CD4-positive, alpha-beta memory T cell (primary cell): ENCODE measurements at regions of chr20 and their contacts with region 1.

Region 1: GRCh38 chr20:20568604-20569205 is 143.7 kb downstream of the RALGAPA2 start:
- DNase-seq: peak in 4 of 5 donors; percentile 4 to 23 (median 10)
- H3K4me3 ChIP-seq: no peak overlapping the region
- H3K4me3 Mint-ChIP-seq: no peak overlapping the region
- H3K27ac ChIP-seq: no peak overlapping the region
- H3K27ac Mint-ChIP-seq: no peak overlapping the region
- H3K4me1 ChIP-seq: no peaks in the 10 kb centered on the region
- H3K4me1 Mint-ChIP-seq: no peaks in the 10 kb centered on the region
- H3K27me3 ChIP-seq: no peaks in the 10 kb centered on the region
- H3K27me3 Mint-ChIP-seq: no peaks in the 10 kb centered on the region

Region 2: DNA sequence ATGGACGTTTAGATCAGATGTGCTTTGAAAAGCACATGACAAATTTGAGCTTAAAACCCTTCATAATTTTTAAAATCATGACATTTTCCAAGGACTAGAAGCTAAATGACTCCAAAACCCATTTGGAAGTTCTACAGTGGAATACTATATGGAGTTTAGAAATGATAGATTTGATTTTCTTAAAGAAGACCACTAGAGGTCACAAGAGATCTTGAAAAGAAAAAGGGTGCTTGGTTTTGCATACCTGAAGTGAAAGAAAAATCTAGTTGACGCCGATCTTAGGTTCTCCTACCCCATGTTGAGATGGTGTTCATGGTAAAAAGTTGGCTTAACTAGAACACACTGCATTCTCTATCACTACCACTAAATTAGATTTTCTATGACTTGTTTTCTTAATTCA is 484.9 kb before region 1 on chr20:
- CTCF ChIA-PET with region 1: interaction called, 10 read pairs
- POLR2A ChIA-PET with region 1: no interaction called
- intact Hi-C with region 1: no loop called
- DNase-seq: peak in 4 of 5 donors; percentile 22 to 47 (median 44)
- H3K4me3 ChIP-seq: no peak overlapping the region
- H3K4me3 Mint-ChIP-seq: peak overlapping the region in 6 of 8 donors; percentile 75 to 83 (median 78)
- H3K27ac ChIP-seq: no peak overlapping the region
- H3K27ac Mint-ChIP-seq: peak overlapping the region in 2 of 7 donors; percentile 84 to 86
- H3K4me1 ChIP-seq: no peaks in the 10 kb centered on the region
- H3K4me1 Mint-ChIP-seq: peaks cover 0 to 9% (median 7%) of the 10 kb centered on the region in 4 donors
- H3K27me3 ChIP-seq: no peaks in the 10 kb centered on the region
- H3K27me3 Mint-ChIP-seq: peaks cover 6 to 17% of the 10 kb centered on the region in 2 donors

Region 3: GRCh38 chr20:20360464-20360863 is 208.2 kb before region 1 on chr20:
- CTCF ChIA-PET with region 1: no interaction called
- POLR2A ChIA-PET with region 1: no interaction called
- intact Hi-C with region 1: loop called (anchors 1 kb)
- DNase-seq: peak in 2 of 5 donors; percentile 9 to 15
- H3K4me3 ChIP-seq: no peak overlapping the region
- H3K4me3 Mint-ChIP-seq: peak overlapping the region in 6 of 8 donors; percentile 16 to 61 (median 32)
- H3K27ac ChIP-seq: no peak overlapping the region
- H3K27ac Mint-ChIP-seq: no peak overlapping the region
- H3K4me1 ChIP-seq: peaks cover 12% of the 10 kb centered on the region
- H3K4me1 Mint-ChIP-seq: peaks cover 11 to 28% (median 15%) of the 10 kb centered on the region in 4 donors
- H3K27me3 ChIP-seq: peaks cover 5% of the 10 kb centered on the region
- H3K27me3 Mint-ChIP-seq: peaks cover 28 to 29% of the 10 kb centered on the region in 2 donors

Region 4: DNA sequence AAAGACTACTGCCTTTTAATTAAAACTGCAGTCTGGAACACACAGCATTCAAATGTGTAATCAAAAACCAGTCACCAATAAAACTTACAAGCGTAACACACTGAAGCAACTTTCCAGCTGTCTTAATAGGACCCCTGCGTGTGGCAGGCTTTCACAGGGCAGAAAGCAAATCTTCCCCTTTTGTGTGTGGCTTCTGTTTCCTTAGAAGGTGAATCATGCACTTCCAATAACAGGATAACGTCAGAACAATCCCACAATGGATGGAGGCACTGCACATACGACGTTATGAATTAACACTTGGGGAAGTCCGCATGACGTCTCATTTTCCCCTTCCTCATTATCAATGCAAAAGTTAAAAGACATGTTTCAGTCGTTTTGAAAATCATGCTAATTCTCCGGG is 156.0 kb before region 1 on chr20:
- CTCF ChIA-PET with region 1: no interaction called
- POLR2A ChIA-PET with region 1: no interaction called
- intact Hi-C with region 1: no loop called
- DNase-seq: no peak
- H3K4me3 ChIP-seq: no peak overlapping the region
- H3K4me3 Mint-ChIP-seq: no peak overlapping the region
- H3K27ac ChIP-seq: no peak overlapping the region
- H3K27ac Mint-ChIP-seq: no peak overlapping the region
- H3K4me1 ChIP-seq: no peaks in the 10 kb centered on the region
- H3K4me1 Mint-ChIP-seq: peaks cover 0 to 3% (median 0%) of the 10 kb centered on the region in 4 donors
- H3K27me3 ChIP-seq: no peaks in the 10 kb centered on the region
- H3K27me3 Mint-ChIP-seq: no peaks in the 10 kb centered on the region